ENCODE measurements at regions of chr2 and their contacts with region 1.

Region 1: DNA sequence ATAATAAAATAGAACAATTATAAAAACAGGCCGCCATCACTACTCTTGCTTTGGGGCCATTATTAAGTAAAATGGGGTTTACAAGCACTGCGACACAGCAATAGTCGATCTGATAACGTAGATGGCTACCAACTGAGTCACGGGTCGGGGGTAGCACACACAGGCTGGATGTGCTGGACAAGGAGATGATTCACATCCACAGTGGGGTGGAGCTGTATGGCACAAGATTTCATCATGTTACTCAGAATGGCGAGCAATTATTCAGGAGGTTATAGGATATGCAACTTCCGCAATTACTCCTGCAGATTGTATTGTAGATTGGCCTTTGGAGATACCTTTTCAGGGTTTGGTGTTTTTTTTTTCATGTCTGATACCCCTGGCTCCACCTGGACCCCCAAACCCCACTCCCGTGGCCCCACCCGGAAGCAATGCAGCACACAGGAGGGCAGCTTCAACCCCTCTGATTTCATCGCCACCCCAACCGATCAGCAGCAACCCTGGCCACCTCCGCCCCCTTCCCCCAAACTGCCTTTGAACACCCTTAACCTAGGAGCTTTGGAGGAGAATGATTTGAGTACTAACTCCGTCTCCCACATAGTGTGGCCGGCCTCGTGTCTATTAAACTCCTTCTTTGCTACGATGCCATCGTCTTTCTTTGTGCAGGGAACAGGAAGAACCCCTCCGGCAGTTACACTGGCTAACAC is 21.4 kb upstream of the MLPH start:
- DNase-seq: no peak

Region 2: DNA sequence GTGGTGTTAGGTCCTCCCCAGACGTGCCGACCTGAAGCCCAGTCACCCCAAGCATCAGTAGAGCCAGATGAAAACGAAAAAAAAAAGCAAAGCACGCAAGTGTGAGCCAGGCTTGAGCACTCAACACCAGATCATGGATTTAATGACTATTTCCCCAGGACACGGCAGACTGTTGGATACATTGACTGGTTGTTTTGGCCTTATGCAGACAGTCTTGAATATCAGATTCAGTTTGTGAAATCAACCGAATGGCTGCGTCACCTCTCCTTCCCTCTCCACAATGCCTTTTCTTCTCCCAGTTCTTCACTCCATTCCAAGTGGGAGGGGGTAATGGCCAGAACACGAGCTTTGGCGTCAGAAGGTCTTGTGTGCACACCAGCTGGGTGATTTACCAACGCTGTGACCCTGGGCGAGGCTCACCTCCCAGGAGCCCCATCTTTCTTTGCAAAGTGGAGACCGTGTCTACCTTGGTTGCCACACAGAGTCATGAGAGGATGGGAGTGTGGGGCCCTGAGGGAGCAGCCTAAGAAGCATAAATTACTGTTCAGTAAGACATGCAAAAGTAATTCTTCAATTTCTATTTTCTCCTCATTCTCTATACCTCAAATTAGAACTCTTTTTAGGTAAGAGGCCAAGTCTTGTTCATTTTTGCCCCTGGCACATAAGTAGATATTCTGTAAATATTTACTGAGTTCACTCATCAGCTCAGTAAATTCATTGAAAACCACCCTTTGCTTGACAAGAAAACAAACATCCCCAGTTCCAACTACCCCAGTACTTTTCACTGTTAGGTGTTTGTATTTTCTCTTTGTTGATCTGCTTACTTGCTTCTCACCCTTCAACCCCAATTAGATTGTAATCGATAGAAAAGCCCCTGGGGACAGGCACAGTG is 561.0 kb before region 1 on chr2:
- intact Hi-C with region 1: loop called in 1 of 2 experiments (anchors 5 kb)
- DNase-seq: no peak